ENCODE measurements at regions of chr19 and their contacts with region 1.

Region 1: GRCh38 chr19:21082011-21082975 is at the start of gene ZNF714:
- DNase-seq: peak; percentile 50 to 88 (median 82)
- ATAC-seq: peak; percentile 99 to 100 (median 100)
- H3K4me3 ChIP-seq: peak within 1 kb of the TSS; percentile 71 to 79
- H3K4me3 Mint-ChIP-seq: peak within 1 kb of the TSS; percentile 96 to 100 (median 99)
- H3K27ac ChIP-seq: peak within 1 kb of the TSS; percentile 51
- H3K27ac Mint-ChIP-seq: peak within 1 kb of the TSS; percentile 91 to 92
- H3K4me1 ChIP-seq: peaks cover 0 to 2% of the 10 kb centered on the region in 2 experiments
- H3K4me1 Mint-ChIP-seq: peaks cover 9 to 21% (median 16%) of the 10 kb centered on the region in 3 donors
- H3K27me3 ChIP-seq: no peaks in the 10 kb centered on the region
- H3K27me3 Mint-ChIP-seq: no peaks in the 10 kb centered on the region
- total RNA-seq, gene ZNF714: 8.6 to 13.6 (median 9.8) TPM

Region 2: GRCh38 chr19:20999731-21000352 is 82.5 kb before region 1 on chr19:
- CTCF ChIA-PET with region 1: no interaction called
- POLR2A ChIA-PET with region 1: interaction called in 1 of 2 experiments, 10 read pairs
- DNase-seq: peak; percentile 56 to 92 (median 86)
- ATAC-seq: peak; percentile 100
- H3K4me3 ChIP-seq: peak overlapping the region; percentile 40 to 92
- H3K4me3 Mint-ChIP-seq: peak overlapping the region; percentile 77 to 85 (median 78)
- H3K27ac ChIP-seq: no peak overlapping the region
- H3K27ac Mint-ChIP-seq: no peak overlapping the region
- H3K4me1 ChIP-seq: peaks cover 5 to 9% of the 10 kb centered on the region in 2 experiments
- H3K4me1 Mint-ChIP-seq: peaks cover 5 to 8% (median 7%) of the 10 kb centered on the region in 3 donors
- H3K27me3 ChIP-seq: peaks cover 0 to 6% of the 10 kb centered on the region in 2 experiments
- H3K27me3 Mint-ChIP-seq: no peaks in the 10 kb centered on the region

Region 3: GRCh38 chr19:21052902-21053301 is 29.4 kb before region 1 on chr19:
- CTCF ChIA-PET with region 1: no interaction called
- POLR2A ChIA-PET with region 1: no interaction called
- DNase-seq: no peak
- ATAC-seq: no peak
- H3K4me3 ChIP-seq: no peak overlapping the region
- H3K4me3 Mint-ChIP-seq: no peak overlapping the region
- H3K27ac ChIP-seq: no peak overlapping the region
- H3K27ac Mint-ChIP-seq: no peak overlapping the region
- H3K4me1 ChIP-seq: no peaks in the 10 kb centered on the region
- H3K4me1 Mint-ChIP-seq: no peaks in the 10 kb centered on the region
- H3K27me3 ChIP-seq: no peaks in the 10 kb centered on the region
- H3K27me3 Mint-ChIP-seq: no peaks in the 10 kb centered on the region

Measured in T-cell (primary cell).